ENCODE measurements at regions of chr19 and their contacts with region 1.

Region 1: DNA sequence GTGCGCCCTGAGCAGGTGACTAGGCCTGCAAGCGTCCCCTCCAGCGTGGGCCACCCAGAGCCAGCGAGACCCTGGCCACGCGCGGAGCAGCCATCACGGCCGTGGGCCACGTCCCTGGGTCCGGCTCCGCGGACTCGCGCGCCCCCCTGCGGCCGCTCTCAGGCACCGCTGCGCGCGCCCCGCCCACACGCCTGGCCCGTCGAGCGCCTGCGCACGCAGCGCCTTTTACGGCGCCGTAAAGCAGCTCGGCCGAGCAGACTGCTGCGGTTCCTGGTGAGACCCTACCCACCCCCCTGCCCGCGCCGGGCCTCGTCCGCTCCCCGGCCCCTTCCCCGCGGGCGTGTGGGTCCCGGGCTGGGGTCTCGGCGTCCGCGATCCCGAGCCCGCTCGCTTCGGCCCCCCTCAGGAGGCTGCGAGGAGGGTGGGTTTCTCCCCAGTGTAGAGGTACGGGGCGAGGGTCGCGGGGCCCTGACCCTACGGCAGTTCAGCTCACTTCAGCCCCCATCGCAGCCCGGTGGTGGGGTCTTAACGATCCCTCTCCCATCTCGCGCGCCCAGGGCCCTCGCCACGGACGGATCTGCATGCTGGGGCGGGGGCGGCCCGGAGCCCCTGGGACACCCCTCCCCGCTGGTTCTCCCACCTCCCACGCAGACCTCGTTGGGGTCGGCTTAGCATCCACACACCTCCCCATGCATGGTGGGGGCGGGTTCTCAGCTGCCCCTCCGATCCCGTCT is at the start of gene TRAPPC5:
- DNase-seq: no peak
- H3K4me3 ChIP-seq: peak within 1 kb of the TSS; percentile 100
- H3K27me3 ChIP-seq: no peaks in the 10 kb centered on the region; the same call in 1 of the 2 replicates
- CTCF ChIP-seq: peak; percentile 37; the same call in 1 of the 2 replicates
- polyA plus RNA-seq, gene TRAPPC5: 59.7 and 85.1 TPM in 2 replicates

Region 2: DNA sequence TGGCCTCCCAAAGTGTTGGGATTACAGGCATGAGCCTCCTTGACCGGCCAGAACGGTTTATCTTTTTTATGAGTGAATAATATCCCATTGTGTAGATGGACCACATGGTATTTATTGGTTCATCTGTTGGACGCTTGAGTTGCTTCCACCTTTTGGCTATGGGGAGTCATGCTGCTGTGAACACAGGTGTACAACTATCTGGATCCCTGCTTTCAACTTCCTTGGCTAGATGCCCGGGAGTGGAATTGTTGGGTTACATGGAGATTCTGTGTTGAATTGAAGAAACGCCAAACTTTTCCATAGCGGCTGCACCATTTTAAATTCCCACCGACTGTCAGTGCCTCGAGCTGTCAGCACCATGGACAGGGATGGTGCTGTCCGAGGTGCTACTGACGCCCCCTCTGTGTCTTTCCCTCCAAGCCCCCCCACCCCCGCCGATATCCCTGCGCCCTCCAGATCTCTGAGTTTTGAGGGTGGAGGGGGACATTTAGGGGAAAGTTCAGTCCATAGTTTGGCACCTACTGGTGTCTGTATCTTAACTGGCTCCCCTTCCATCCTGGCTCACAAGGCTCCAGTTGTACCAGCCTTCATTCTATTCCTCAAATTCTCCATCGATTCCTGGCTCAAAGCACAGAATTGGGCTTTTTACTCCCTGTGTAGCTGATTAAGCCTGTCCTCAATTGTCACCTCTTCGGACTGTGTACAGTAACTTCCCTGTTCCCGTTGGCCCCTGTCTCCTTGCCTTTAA is 118.0 kb before region 1 on chr19:
- CTCF ChIA-PET with region 1: interaction called, 17 read pairs
- POLR2A ChIA-PET with region 1: no interaction called
- DNase-seq: no peak
- H3K4me3 ChIP-seq: no peak overlapping the region
- H3K27me3 ChIP-seq: no peaks in the 10 kb centered on the region
- CTCF ChIP-seq: no peak

Region 3: DNA sequence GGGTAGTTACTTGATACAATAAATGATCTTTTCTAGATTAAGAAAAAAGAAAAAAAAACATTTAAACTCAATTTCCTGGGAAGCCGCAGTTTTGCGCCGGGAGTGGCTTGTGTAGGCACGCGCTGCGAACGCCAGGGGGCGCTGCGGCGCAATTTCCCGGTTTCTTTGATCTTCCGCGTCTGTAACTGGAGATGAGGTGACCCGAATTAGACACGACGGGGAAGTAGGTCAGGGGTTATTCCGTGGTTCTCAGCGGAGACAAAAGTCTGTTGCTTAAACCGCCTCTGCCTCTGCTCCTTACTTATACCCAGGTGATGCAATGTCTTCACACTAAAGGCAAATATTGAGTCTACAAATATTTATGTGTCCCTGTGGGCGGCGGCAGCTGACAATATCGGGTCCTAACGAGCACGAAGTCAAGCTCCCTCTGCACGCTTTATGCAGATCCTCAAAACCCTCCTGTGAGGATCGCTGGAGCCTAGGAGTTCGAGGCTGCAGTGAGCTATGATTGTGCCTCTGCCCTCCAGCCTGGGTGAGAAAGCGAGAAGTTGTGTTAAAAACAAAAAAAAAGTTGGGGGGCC is 28.6 kb before region 1 on chr19:
- CTCF ChIA-PET with region 1: interaction called, 91 read pairs
- POLR2A ChIA-PET with region 1: no interaction called
- DNase-seq: peak; percentile 19
- H3K4me3 ChIP-seq: no peak overlapping the region; the same call in 1 of the 2 replicates
- H3K27me3 ChIP-seq: peaks cover 3% of the 10 kb centered on the region; the same call in 1 of the 2 replicates
- CTCF ChIP-seq: peak; percentile 97

Region 4: GRCh38 chr19:7670150-7670783 is 10.5 kb before region 1 on chr19:
- CTCF ChIA-PET with region 1: interaction called, 33 read pairs
- POLR2A ChIA-PET with region 1: no interaction called
- DNase-seq: no peak
- H3K4me3 ChIP-seq: no peak overlapping the region
- H3K27me3 ChIP-seq: peaks cover 12% of the 10 kb centered on the region
- CTCF ChIP-seq: no peak

Region 5: DNA sequence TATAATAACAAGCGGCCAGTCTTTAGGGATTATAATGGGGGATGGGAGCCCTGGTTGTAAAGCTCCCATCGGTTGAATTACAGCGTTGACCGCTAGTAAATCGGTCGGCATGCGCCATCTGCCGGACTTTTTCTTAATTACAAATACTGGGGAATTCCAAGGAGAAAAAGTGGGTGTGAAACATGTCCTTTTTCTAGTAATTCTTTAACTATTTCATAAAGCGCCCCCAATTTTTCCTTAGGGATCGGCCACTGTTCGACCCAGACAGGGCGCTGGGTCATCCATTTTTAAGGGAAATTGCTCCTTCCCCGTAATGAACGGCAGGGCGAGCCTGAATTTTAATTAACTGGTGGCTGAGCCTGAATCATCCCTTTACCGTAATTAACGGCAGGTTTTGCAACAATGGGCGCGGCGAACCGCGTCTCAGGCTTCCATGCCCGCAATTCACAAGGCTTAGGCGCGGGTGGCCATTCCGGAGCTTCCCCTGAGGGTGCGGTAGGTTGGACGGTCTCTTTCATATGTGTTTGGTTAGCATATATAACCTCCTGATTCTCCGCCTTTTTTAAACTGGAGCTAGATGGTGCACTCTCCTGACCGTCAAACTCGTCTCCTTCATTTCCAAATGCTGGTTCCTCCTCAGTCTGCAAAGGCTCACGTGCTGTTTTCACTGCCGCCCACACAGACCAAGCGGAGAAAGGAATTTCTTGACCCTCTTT is 119.0 kb after region 1 on chr19:
- CTCF ChIA-PET with region 1: interaction called, 30 read pairs
- POLR2A ChIA-PET with region 1: no interaction called
- DNase-seq: no peak
- H3K4me3 ChIP-seq: no peak overlapping the region; the same call in 1 of the 2 replicates
- H3K27me3 ChIP-seq: peaks cover 5% of the 10 kb centered on the region
- CTCF ChIP-seq: peak; percentile 57

Measured in BJ (cell line).